HepG2 (cell line): ENCODE measurements at regions of chr6 and their contacts with region 1.

Region 1: GRCh38 chr6:107731422-107732319 is 92.4 kb downstream of the SCML4 start:
- DNase-seq: no peak
- ATAC-seq: peak; percentile 39
- H3K4me3 ChIP-seq: peak overlapping the region; percentile 3 to 57 (median 10); a peak in 3 of 6 replicates
- H3K27ac ChIP-seq: no peak overlapping the region
- H3K4me1 ChIP-seq: peaks cover 30% of the 10 kb centered on the region
- H3K27me3 ChIP-seq: peaks cover 0 to 10% of the 10 kb centered on the region in 2 experiments; a peak in 3 of 5 replicates
- CTCF ChIP-seq: no peak
- EP300 ChIP-seq: no peak
- POLR2A ChIP-seq: no peak
- RAD21 ChIP-seq: no peak

Region 2: DNA sequence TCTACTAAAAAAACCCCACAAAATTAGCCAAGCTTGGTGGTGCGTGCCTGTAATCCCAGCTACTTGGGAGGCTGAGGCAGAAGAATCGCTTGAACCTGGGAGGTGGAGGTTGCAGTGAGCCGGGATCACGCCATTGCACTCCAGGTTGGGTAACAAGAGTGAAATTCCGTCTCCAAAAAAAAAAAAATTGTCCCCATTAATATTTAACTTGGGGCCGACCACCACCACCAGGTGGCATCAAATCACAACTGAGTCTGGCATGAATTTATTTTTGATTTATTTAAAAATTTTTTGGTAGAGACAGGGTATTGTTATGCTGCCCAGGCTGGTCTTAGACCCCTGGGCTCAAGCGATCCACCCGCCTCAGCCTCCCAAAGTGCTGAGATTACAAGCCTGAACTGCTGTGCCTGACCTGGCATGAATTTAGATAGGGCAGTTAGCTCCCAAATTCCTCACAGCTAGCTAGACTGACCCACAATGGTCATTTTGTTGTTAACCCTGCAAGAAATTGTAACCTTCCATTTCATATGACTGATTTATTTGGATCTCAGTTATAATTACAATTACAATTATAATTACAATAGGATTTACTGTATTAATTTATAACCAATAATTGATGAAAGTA is 599.2 kb before region 1 on chr6:
- CTCF ChIA-PET with region 1: no interaction called
- POLR2A ChIA-PET with region 1: no interaction called
- in situ Hi-C with region 1: no loop called
- intact Hi-C with region 1: no loop called
- DNase-seq: peak; percentile 46
- ATAC-seq: peak; percentile 56
- H3K4me3 ChIP-seq: no peak overlapping the region
- H3K27ac ChIP-seq: no peak overlapping the region
- H3K4me1 ChIP-seq: peaks cover 42% of the 10 kb centered on the region
- H3K27me3 ChIP-seq: no peaks in the 10 kb centered on the region
- CTCF ChIP-seq: peak; percentile 48
- EP300 ChIP-seq: no peak
- POLR2A ChIP-seq: no peak
- RAD21 ChIP-seq: peak; percentile 29; the same call in 1 of the 2 replicates

Region 3: GRCh38 chr6:107399935-107400334 is 331.7 kb before region 1 on chr6:
- CTCF ChIA-PET with region 1: no interaction called
- POLR2A ChIA-PET with region 1: no interaction called
- in situ Hi-C with region 1: no loop called
- intact Hi-C with region 1: loop called (anchors 5 kb)
- DNase-seq: no peak
- ATAC-seq: no peak
- H3K4me3 ChIP-seq: no peak overlapping the region
- H3K27ac ChIP-seq: no peak overlapping the region
- H3K4me1 ChIP-seq: 0 out of 2 replicates have a peak, but pooled peaks cover 8% of the 10 kb centered on the region
- H3K27me3 ChIP-seq: no peaks in the 10 kb centered on the region
- CTCF ChIP-seq: no peak
- EP300 ChIP-seq: no peak
- POLR2A ChIP-seq: no peak
- RAD21 ChIP-seq: no peak

Region 4: GRCh38 chr6:107704347-107705013 is 27.2 kb before region 1 on chr6:
- CTCF ChIA-PET with region 1: no interaction called
- POLR2A ChIA-PET with region 1: no interaction called
- in situ Hi-C with region 1: no loop called
- intact Hi-C with region 1: no loop called
- DNase-seq: peak; percentile 29
- ATAC-seq: peak; percentile 61
- H3K4me3 ChIP-seq: no peak overlapping the region; a peak in 1 of 6 replicates
- H3K27ac ChIP-seq: no peak overlapping the region
- H3K4me1 ChIP-seq: peaks cover 11% of the 10 kb centered on the region
- H3K27me3 ChIP-seq: peaks cover 2 to 9% of the 10 kb centered on the region in 2 experiments; a peak in 2 of 5 replicates
- CTCF ChIP-seq: peak; percentile 71
- EP300 ChIP-seq: no peak
- POLR2A ChIP-seq: no peak
- RAD21 ChIP-seq: no peak

Region 5: DNA sequence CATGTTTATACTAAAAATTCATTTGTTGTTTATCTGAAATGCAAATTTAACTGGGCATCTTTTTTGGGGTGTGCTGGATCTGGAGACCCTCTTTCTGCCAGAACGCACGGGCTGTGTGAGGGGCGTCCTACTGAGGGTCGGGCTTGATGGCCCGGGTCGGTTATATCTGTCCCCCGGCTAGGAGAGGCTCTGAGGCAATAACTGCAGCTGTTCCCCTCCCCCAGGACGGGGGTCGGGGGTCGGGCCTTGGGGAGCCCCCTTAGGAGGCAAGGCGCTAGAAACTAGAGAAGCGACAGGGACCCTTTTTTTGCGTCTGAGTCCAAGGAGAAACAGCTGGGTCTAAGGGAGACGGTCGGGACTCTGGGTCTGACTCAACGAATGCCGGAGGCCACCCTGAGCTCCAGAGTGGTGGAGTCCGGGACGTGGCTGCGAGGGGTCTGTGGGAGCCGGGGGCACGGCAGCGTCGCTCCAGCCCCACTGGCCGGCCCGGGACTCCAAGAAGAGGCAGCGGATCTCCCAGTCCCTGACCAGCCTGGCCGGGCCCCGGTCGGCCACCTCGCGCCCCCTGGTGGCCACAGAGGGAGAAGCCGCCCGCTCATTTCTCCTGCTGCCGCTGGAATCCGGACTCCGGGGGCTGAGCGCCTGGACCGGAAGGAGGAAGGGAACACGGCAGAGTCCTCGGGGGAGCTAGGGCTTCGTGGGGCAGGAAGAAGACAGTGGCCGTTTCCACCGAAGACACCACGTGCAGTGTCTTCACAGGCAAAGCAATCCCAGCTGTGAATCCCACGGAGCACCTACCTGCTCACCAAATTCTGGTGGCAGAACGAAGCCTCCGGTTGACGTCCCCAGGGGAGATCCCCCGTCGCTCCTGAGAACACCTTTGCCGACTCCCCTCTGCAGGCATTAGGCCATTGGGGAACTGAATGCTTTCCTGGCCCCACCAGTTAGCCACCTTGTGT is 116.5 kb after region 1 on chr6:
- CTCF ChIA-PET with region 1: no interaction called
- POLR2A ChIA-PET with region 1: no interaction called
- in situ Hi-C with region 1: no loop called
- intact Hi-C with region 1: loop called (anchors 10 kb)
- DNase-seq: peak; percentile 58
- ATAC-seq: peak; percentile 97
- H3K4me3 ChIP-seq: peak overlapping the region in 2 of 3 experiments; percentile 32 to 66; a peak in 4 of 6 replicates
- H3K27ac ChIP-seq: no peak overlapping the region
- H3K4me1 ChIP-seq: peaks cover 6% of the 10 kb centered on the region
- H3K27me3 ChIP-seq: peaks cover 0 to 14% of the 10 kb centered on the region in 2 experiments; a peak in 3 of 5 replicates
- CTCF ChIP-seq: peak; percentile 96
- EP300 ChIP-seq: no peak
- POLR2A ChIP-seq: no peak
- RAD21 ChIP-seq: peak; percentile 94

Region 6: GRCh38 chr6:107866606-107867301 is 135.1 kb after region 1 on chr6:
- CTCF ChIA-PET with region 1: no interaction called
- POLR2A ChIA-PET with region 1: no interaction called
- in situ Hi-C with region 1: no loop called
- intact Hi-C with region 1: loop called (anchors 5 kb)
- DNase-seq: peak; percentile 56
- ATAC-seq: peak; percentile 62
- H3K4me3 ChIP-seq: no peak overlapping the region
- H3K27ac ChIP-seq: no peak overlapping the region
- H3K4me1 ChIP-seq: no peaks in the 10 kb centered on the region
- H3K27me3 ChIP-seq: no peaks in the 10 kb centered on the region
- CTCF ChIP-seq: peak; percentile 69
- EP300 ChIP-seq: no peak
- POLR2A ChIP-seq: no peak
- RAD21 ChIP-seq: no peak